ENCODE measurements at regions of chr6 and their contacts with region 1.

Region 1: GRCh38 chr6:116096979-116097816 is 3.5 kb upstream of the NT5DC1 start:
- DNase-seq: peak; percentile 23
- ATAC-seq: no peak
- H3K4me3 ChIP-seq: no peak overlapping the region
- H3K27ac ChIP-seq: no peak overlapping the region
- H3K4me1 ChIP-seq: peaks cover 14% of the 10 kb centered on the region
- H3K27me3 ChIP-seq: no peaks in the 10 kb centered on the region
- CTCF ChIP-seq: peak; percentile 45

Region 2: DNA sequence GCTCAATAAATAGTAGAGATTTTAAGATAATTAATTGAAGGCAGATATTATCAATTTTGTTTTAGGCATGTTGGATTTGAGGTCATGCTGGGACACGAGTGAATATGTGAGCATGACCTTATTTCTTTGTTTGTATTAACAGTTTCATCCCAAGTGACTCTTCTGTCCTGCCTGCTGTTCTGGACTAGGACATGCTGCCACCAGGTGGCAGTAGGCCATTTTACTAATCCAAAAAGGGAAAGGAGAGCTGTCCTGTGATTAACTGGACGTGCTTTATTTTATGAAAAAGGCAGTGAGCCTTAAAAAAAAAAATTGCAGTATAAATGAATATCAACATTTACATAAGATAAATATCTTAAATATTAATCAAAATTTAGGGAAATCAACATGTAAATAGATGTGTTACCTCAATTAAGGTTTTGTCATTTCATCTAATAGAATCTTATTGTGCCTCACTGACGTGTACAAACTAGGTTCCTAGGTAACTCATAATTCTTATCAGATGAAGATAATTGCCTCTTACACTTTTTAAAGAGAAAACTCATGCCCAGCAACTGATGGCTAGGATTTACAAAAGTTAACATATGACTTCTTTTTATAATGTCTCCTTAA is 86.3 kb before region 1 on chr6:
- CTCF ChIA-PET with region 1: interaction called, 20 read pairs
- POLR2A ChIA-PET with region 1: interaction called, 3 read pairs
- intact Hi-C with region 1: loop called (anchors 1 kb)
- DNase-seq: peak; percentile 80
- ATAC-seq: peak; percentile 48
- H3K4me3 ChIP-seq: no peak overlapping the region; the same call in 1 of the 2 replicates
- H3K27ac ChIP-seq: peak overlapping the region; percentile 47
- H3K4me1 ChIP-seq: peaks cover 43% of the 10 kb centered on the region
- H3K27me3 ChIP-seq: no peaks in the 10 kb centered on the region
- CTCF ChIP-seq: peak; percentile 79

Region 3: GRCh38 chr6:116060572-116061283 is 36.5 kb before region 1 on chr6 and contains the start of gene FRK:
- CTCF ChIA-PET with region 1: interaction called, 10 read pairs
- POLR2A ChIA-PET with region 1: no interaction called
- intact Hi-C with region 1: no loop called
- DNase-seq: peak; percentile 64
- ATAC-seq: peak; percentile 86
- H3K4me3 ChIP-seq: peak within 1 kb of the TSS; percentile 68
- H3K27ac ChIP-seq: peak within 1 kb of the TSS; percentile 46
- H3K4me1 ChIP-seq: peaks cover 8% of the 10 kb centered on the region; the same call in 1 of the 2 replicates
- H3K27me3 ChIP-seq: no peaks in the 10 kb centered on the region
- CTCF ChIP-seq: peak; percentile 55
- total RNA-seq, gene FRK: 0.46 and 0.66 TPM in 2 replicates

Region 4: GRCh38 chr6:116084284-116084683 is 12.9 kb before region 1 on chr6:
- CTCF ChIA-PET with region 1: no interaction called
- POLR2A ChIA-PET with region 1: no interaction called
- intact Hi-C with region 1: no loop called
- DNase-seq: no peak
- ATAC-seq: no peak
- H3K4me3 ChIP-seq: no peak overlapping the region
- H3K27ac ChIP-seq: no peak overlapping the region
- H3K4me1 ChIP-seq: peaks cover 7% of the 10 kb centered on the region
- H3K27me3 ChIP-seq: no peaks in the 10 kb centered on the region
- CTCF ChIP-seq: no peak